ENCODE measurements at regions of chr11 and their contacts with region 1.

Region 1: GRCh38 chr11:46238967-46239800 is 38.3 kb upstream of the CREB3L1 start:
- DNase-seq: peak; percentile 98
- H3K4me3 ChIP-seq: peak overlapping the region; percentile 45
- H3K27ac ChIP-seq: no peak overlapping the region
- H3K4me1 ChIP-seq: peaks cover 46% of the 10 kb centered on the region
- H3K27me3 ChIP-seq: no peaks in the 10 kb centered on the region
- CTCF ChIP-seq: peak; percentile 100

Region 2: DNA sequence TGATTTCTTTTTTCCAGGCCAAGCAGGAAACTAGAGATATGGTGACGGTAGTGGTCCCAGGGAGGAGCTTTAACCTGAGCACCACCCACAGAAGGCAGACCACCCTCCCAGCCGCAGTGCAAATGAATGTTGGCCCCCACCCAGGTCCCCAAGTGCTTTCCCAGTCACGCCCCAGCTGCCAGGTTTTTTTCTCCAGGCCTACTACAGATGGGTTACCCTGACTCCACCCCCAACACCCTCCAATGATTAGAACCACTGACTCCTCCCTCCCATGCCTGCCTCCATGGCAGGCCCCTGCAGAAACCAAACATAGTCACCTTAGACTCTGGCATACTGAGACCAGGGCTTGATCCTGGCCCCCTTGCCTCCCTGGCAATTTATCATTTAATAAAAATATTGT is 515.0 kb before region 1 on chr11:
- CTCF ChIA-PET with region 1: no interaction called
- POLR2A ChIA-PET with region 1: no interaction called
- intact Hi-C with region 1: no loop called
- DNase-seq: no peak
- H3K4me3 ChIP-seq: no peak overlapping the region
- H3K27ac ChIP-seq: no peak overlapping the region
- H3K4me1 ChIP-seq: peaks cover 10% of the 10 kb centered on the region
- H3K27me3 ChIP-seq: no peaks in the 10 kb centered on the region
- CTCF ChIP-seq: no peak

Region 3: GRCh38 chr11:45964911-45965389 is 274.2 kb before region 1 on chr11:
- CTCF ChIA-PET with region 1: interaction called, 4 read pairs
- POLR2A ChIA-PET with region 1: no interaction called
- intact Hi-C with region 1: loop called (anchors 5 kb)
- DNase-seq: peak; percentile 97
- H3K4me3 ChIP-seq: no peak overlapping the region
- H3K27ac ChIP-seq: no peak overlapping the region
- H3K4me1 ChIP-seq: no peaks in the 10 kb centered on the region
- H3K27me3 ChIP-seq: no peaks in the 10 kb centered on the region
- CTCF ChIP-seq: peak; percentile 100

Region 4: GRCh38 chr11:46278387-46279125 is 39.4 kb after region 1 on chr11:
- CTCF ChIA-PET with region 1: interaction called, 10 read pairs
- POLR2A ChIA-PET with region 1: interaction called, 9 read pairs
- intact Hi-C with region 1: loop called (anchors 2 kb)
- DNase-seq: peak; percentile 72
- H3K4me3 ChIP-seq: peak overlapping the region; percentile 62
- H3K27ac ChIP-seq: peak overlapping the region; percentile 3
- H3K4me1 ChIP-seq: peaks cover 46% of the 10 kb centered on the region
- H3K27me3 ChIP-seq: no peaks in the 10 kb centered on the region
- CTCF ChIP-seq: peak; percentile 99

Region 5: GRCh38 chr11:46308631-46309419 is 69.6 kb after region 1 on chr11:
- CTCF ChIA-PET with region 1: interaction called, 205 read pairs
- POLR2A ChIA-PET with region 1: interaction called, 10 read pairs
- intact Hi-C with region 1: loop called (anchors 1 kb)
- DNase-seq: peak; percentile 89
- H3K4me3 ChIP-seq: no peak overlapping the region
- H3K27ac ChIP-seq: no peak overlapping the region
- H3K4me1 ChIP-seq: no peaks in the 10 kb centered on the region
- H3K27me3 ChIP-seq: no peaks in the 10 kb centered on the region
- CTCF ChIP-seq: peak; percentile 100

Region 6: GRCh38 chr11:46352063-46352841 is 113.1 kb after region 1 on chr11:
- CTCF ChIA-PET with region 1: interaction called, 4 read pairs
- POLR2A ChIA-PET with region 1: interaction called, 10 read pairs
- intact Hi-C with region 1: no loop called
- DNase-seq: peak; percentile 88
- H3K4me3 ChIP-seq: no peak overlapping the region
- H3K27ac ChIP-seq: peak overlapping the region; percentile 45
- H3K4me1 ChIP-seq: peaks cover 59% of the 10 kb centered on the region
- H3K27me3 ChIP-seq: no peaks in the 10 kb centered on the region
- CTCF ChIP-seq: peak; percentile 100

Region 7: GRCh38 chr11:46404476-46405017 is 165.4 kb after region 1 on chr11:
- CTCF ChIA-PET with region 1: no interaction called
- POLR2A ChIA-PET with region 1: no interaction called
- intact Hi-C with region 1: no loop called
- DNase-seq: no peak
- H3K4me3 ChIP-seq: no peak overlapping the region
- H3K27ac ChIP-seq: no peak overlapping the region
- H3K4me1 ChIP-seq: no peaks in the 10 kb centered on the region
- H3K27me3 ChIP-seq: no peaks in the 10 kb centered on the region
- CTCF ChIP-seq: no peak

Region 8: GRCh38 chr11:46445920-46446771 is 207.0 kb after region 1 on chr11:
- CTCF ChIA-PET with region 1: interaction called, 25 read pairs
- POLR2A ChIA-PET with region 1: no interaction called
- intact Hi-C with region 1: no loop called
- DNase-seq: peak; percentile 67
- H3K4me3 ChIP-seq: no peak overlapping the region
- H3K27ac ChIP-seq: no peak overlapping the region
- H3K4me1 ChIP-seq: peaks cover 11% of the 10 kb centered on the region
- H3K27me3 ChIP-seq: no peaks in the 10 kb centered on the region
- CTCF ChIP-seq: peak; percentile 38

Region 9: DNA sequence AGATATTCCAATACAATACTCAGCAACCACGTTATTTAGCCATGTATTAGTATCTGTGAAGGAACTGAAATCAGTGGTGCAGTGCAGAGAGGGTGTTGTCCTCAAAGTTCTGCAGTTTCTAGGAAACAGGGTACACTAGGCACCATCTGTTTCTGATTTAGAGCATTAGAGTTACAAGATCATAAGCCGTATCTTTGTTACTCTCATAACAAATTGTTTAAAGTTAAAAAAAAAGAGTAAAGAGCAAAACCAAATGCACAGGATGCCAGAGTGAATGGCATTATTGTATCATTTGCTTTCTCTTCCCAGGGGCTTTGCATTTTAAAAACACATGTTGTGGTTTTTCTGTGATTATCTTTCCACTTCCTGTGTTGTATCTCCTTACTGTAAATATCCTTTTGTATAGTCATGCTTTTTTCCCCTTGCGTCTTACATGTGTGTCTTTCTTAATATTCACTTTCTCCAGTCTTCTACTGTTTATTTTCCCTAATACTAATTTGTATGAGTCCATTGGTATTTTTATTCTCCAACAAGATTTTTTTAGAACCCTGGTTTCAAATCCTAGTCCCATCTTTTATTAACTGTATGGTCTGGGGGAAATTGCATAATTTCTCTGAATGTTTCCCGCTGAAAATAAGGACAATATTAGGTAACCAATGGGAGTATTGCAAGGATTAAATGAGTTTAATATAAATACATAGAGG is 1624.2 kb after region 1 on chr11:
- CTCF ChIA-PET with region 1: no interaction called
- POLR2A ChIA-PET with region 1: no interaction called
- intact Hi-C with region 1: loop called (anchors 10 kb)
- DNase-seq: peak; percentile 98
- H3K4me3 ChIP-seq: no peak overlapping the region
- H3K27ac ChIP-seq: peak overlapping the region; percentile 83
- H3K4me1 ChIP-seq: peaks cover 56% of the 10 kb centered on the region
- H3K27me3 ChIP-seq: no peaks in the 10 kb centered on the region
- CTCF ChIP-seq: no peak

Measured in A673 (cell line).